Activated T-helper 1 cell treated with anti-CD3 and anti-CD28 coated beads, Interleukin-12 subunit alpha, Interleukin-12 subunit beta, Interleukin-2, Interleukin-4 antibody, amounts not matched to agents 30 ng/mL and 10 ng/mL and 1 ng/mL, durations not matched to agents 14 hours and 24 hours and 36 hours (primary cell): ENCODE measurements at regions of chr6 and their contacts with region 1.

Region 1: DNA sequence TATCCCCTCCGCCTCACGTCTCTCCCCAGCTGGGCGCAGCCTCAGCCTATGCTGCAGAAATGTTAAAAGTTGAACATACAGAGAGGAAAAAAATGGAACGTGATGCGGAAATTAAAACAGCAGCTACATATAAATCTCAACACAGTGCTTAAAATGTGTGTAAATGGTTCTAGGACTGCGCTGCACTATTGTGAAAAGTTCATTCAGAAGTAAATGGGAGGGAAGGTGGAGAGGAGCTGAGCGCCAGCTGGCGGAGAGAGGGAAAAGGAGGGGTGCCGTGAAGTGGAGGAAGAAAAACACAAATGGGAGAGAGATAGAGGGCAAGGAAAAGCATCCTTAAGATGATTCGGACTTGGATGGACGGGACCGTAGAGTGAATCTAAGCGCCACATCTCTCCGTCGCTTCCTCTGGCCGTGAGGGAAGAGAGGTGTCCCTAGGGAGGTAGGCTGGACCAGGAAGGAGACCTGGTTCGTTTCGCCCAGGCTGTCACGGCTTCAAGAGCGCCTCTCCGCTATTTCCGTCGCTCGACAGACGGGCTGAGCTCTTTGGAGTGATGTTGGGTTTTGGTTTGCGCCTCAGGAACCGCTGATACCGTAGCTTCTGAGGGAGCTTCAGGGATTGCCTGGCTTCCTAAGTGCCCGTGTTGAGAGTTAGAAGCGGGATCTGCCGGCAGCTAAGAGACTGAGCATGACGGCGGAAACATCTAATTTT is 113.7 kb downstream of the TRIM27 start:
- DNase-seq: no peak
- H3K4me3 Mint-ChIP-seq: peak overlapping the region; percentile 43
- H3K27ac Mint-ChIP-seq: peak overlapping the region; percentile 49
- H3K4me1 Mint-ChIP-seq: peaks cover 19% of the 10 kb centered on the region
- H3K27me3 Mint-ChIP-seq: peaks cover 95% of the 10 kb centered on the region

Region 2: GRCh38 chr6:27295301-27296081 is 1514.6 kb before region 1 on chr6:
- intact Hi-C with region 1: loop called (anchors 5 kb)
- DNase-seq: no peak
- H3K4me3 Mint-ChIP-seq: no peak overlapping the region
- H3K27ac Mint-ChIP-seq: peak overlapping the region; percentile 32
- H3K4me1 Mint-ChIP-seq: no peaks in the 10 kb centered on the region
- H3K27me3 Mint-ChIP-seq: peaks cover 54% of the 10 kb centered on the region

Region 3: GRCh38 chr6:28683944-28684538 is 126.1 kb before region 1 on chr6:
- intact Hi-C with region 1: loop called (anchors 5 kb)
- DNase-seq: no peak
- H3K4me3 Mint-ChIP-seq: no peak overlapping the region
- H3K27ac Mint-ChIP-seq: no peak overlapping the region
- H3K4me1 Mint-ChIP-seq: peaks cover 19% of the 10 kb centered on the region
- H3K27me3 Mint-ChIP-seq: peaks cover 65% of the 10 kb centered on the region

Region 4: DNA sequence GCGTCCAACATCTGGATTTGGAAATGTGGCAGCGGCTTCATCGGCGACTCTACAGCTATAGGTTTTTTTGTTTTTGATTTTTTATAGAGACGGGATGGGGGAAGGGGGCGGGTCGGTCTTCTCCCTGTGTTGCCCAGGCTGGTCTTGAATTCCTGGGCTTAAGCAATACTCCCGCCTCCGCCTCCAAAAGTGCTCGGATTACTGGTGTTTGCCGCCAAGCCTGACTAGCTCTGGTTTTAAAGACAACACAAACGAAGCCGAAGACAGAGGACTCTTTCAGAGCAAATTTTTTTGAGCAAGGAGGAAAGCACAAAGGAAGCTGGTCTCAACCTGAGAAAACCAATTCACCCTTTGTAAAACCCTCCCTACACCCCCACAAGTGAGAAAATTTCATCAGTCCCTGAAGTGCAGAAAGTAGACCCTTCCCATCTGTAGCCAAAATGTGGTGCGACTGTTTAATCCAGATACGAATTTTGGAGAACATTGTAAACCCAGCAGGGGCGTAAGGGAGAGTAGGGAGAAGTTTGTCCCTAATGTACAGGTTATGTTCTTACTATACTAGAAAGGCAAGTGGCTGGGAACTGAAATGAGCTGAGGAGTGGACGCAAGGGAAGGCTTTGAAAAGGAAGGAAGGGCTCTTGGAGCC is 72.2 kb before region 1 on chr6:
- intact Hi-C with region 1: loop called (anchors 2 kb)
- DNase-seq: no peak
- H3K4me3 Mint-ChIP-seq: peak overlapping the region; percentile 12
- H3K27ac Mint-ChIP-seq: peak overlapping the region; percentile 54
- H3K4me1 Mint-ChIP-seq: peaks cover 10% of the 10 kb centered on the region
- H3K27me3 Mint-ChIP-seq: peaks cover 72% of the 10 kb centered on the region

Region 5: GRCh38 chr6:28775405-28776129 is 34.5 kb before region 1 on chr6:
- intact Hi-C with region 1: loop called (anchors 2 kb)
- DNase-seq: no peak
- H3K4me3 Mint-ChIP-seq: no peak overlapping the region
- H3K27ac Mint-ChIP-seq: peak overlapping the region; percentile 83
- H3K4me1 Mint-ChIP-seq: peaks cover 9% of the 10 kb centered on the region
- H3K27me3 Mint-ChIP-seq: peaks cover 90% of the 10 kb centered on the region

Region 6: GRCh38 chr6:28794175-28795002 is 15.7 kb before region 1 on chr6:
- intact Hi-C with region 1: loop called (anchors 2 kb)
- DNase-seq: no peak
- H3K4me3 Mint-ChIP-seq: peak overlapping the region; percentile 53
- H3K27ac Mint-ChIP-seq: peak overlapping the region; percentile 15
- H3K4me1 Mint-ChIP-seq: peaks cover 40% of the 10 kb centered on the region
- H3K27me3 Mint-ChIP-seq: peaks cover 83% of the 10 kb centered on the region

Region 7: GRCh38 chr6:28824793-28825731 is 15.0 kb after region 1 on chr6:
- intact Hi-C with region 1: loop called (anchors 2 kb)
- DNase-seq: no peak
- H3K4me3 Mint-ChIP-seq: no peak overlapping the region
- H3K27ac Mint-ChIP-seq: peak overlapping the region; percentile 37
- H3K4me1 Mint-ChIP-seq: peaks cover 12% of the 10 kb centered on the region
- H3K27me3 Mint-ChIP-seq: peaks cover 51% of the 10 kb centered on the region

Region 8: GRCh38 chr6:30044630-30045029 is 1234.5 kb after region 1 on chr6:
- intact Hi-C with region 1: no loop called
- DNase-seq: no peak
- H3K4me3 Mint-ChIP-seq: no peak overlapping the region
- H3K27ac Mint-ChIP-seq: no peak overlapping the region
- H3K4me1 Mint-ChIP-seq: peaks cover 25% of the 10 kb centered on the region
- H3K27me3 Mint-ChIP-seq: no peaks in the 10 kb centered on the region